ENCODE measurements at regions of chr4 and their contacts with region 1.

Region 1: GRCh38 chr4:80365928-80366327 is 30.4 kb downstream of the CFAP299 start:
- DNase-seq: peak; percentile 68
- ATAC-seq: no peak
- H3K4me3 Mint-ChIP-seq: no peak overlapping the region
- H3K27ac Mint-ChIP-seq: no peak overlapping the region
- H3K4me1 Mint-ChIP-seq: peaks cover 6% of the 10 kb centered on the region
- H3K27me3 Mint-ChIP-seq: no peaks in the 10 kb centered on the region

Region 2: DNA sequence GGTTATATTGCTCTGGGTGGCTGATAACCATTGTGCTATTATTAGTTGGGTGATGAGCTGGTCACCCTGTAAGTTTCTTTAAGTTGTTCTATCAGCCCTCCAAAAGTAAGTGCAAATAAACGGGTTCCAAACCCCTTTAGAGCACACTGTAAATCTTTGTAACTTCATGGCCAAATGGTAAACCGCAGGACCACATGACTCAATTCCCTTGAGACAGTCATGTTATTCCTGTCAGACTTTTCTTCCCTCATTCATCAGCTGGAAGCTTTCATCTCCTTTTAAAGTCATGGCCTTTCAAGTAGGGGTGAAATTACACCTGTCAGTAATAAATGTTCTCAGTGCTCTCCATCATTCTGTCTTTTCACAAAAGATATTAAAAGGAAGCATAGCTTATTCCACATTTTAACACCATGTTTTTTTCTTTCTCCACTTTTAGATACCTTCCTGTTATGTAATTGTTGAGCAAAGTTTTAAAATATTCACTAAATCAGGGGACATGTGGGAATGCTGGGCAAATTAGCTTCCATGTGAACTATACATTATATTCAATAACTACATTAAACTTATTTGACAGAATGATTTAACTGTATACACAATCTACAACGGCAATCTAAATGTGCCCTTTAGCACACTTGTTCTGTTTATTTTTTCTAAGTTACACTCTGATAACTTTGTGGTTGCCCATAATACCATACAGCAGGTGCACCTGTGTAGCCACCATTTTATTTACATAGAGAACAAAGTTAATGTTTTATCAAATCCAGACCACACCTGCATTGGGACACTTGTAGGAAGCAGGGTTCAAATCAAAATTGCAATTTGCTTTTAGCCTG is 245.1 kb after region 1 on chr4:
- CTCF ChIA-PET with region 1: no interaction called
- POLR2A ChIA-PET with region 1: no interaction called
- intact Hi-C with region 1: loop called (anchors 10 kb)
- DNase-seq: no peak
- ATAC-seq: no peak
- H3K4me3 Mint-ChIP-seq: no peak overlapping the region
- H3K27ac Mint-ChIP-seq: no peak overlapping the region
- H3K4me1 Mint-ChIP-seq: peaks cover 9% of the 10 kb centered on the region
- H3K27me3 Mint-ChIP-seq: no peaks in the 10 kb centered on the region

Region 3: DNA sequence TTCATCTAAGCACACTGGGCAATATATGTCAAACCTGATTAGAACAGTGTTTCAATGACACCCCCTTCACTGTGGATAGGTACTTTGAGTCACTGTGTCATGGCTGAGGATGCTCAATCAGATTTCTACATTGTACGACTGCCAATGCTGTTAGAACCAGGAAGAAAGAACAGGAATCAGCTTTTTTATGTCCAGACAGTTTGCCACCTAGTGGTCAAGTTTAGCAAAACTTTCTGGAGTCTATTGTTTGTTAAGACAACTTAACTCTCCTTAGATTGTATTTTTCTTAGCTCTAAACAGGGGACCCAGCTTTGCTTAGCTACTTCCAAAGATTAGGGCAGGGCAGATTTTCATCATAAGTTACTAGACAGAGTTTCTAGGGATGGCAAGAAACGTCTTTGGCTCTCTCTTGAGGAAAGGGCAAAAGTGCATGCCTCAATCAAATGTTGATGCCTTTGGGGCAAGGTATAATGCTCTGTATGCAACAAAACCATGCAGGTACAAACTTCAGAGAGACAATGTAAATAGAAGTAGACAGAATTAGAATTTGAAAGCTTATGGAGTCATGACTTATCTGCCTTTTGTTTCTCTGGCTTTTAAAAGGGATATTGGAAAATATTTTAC is 624.1 kb after region 1 on chr4:
- CTCF ChIA-PET with region 1: interaction called, 12 read pairs
- POLR2A ChIA-PET with region 1: no interaction called
- intact Hi-C with region 1: loop called (anchors 1 kb)
- DNase-seq: no peak
- ATAC-seq: peak; percentile 49
- H3K4me3 Mint-ChIP-seq: no peak overlapping the region
- H3K27ac Mint-ChIP-seq: no peak overlapping the region
- H3K4me1 Mint-ChIP-seq: no peaks in the 10 kb centered on the region
- H3K27me3 Mint-ChIP-seq: peaks cover 4% of the 10 kb centered on the region

Region 4: GRCh38 chr4:81040012-81040659 is 674.2 kb after region 1 on chr4:
- CTCF ChIA-PET with region 1: interaction called, 14 read pairs
- POLR2A ChIA-PET with region 1: interaction called, 3 read pairs
- intact Hi-C with region 1: loop called (anchors 1 to 5 kb)
- DNase-seq: no peak
- ATAC-seq: no peak
- H3K4me3 Mint-ChIP-seq: no peak overlapping the region
- H3K27ac Mint-ChIP-seq: no peak overlapping the region
- H3K4me1 Mint-ChIP-seq: no peaks in the 10 kb centered on the region
- H3K27me3 Mint-ChIP-seq: peaks cover 14% of the 10 kb centered on the region